Right cardiac atrium (tissue), 5 donors: ENCODE measurements at regions of chr5 and their contacts with region 1.

Region 1: GRCh38 chr5:147369742-147370374 is 135.0 kb downstream of the STK32A start:
- DNase-seq: no peak
- ATAC-seq: no peak
- H3K4me3 ChIP-seq: no peak overlapping the region
- H3K27ac ChIP-seq: no peak overlapping the region
- H3K4me1 ChIP-seq: no peaks in the 10 kb centered on the region
- H3K27me3 ChIP-seq: no peaks in the 10 kb centered on the region

Region 2: GRCh38 chr5:147223948-147224791 is 145.7 kb before region 1 on chr5:
- intact Hi-C with region 1: loop called in 3 of 4 experiments (anchors 5 to 10 kb)
- DNase-seq: no peak
- ATAC-seq: peak; percentile 68 to 69
- H3K4me3 ChIP-seq: no peak overlapping the region
- H3K27ac ChIP-seq: no peak overlapping the region
- H3K4me1 ChIP-seq: no peaks in the 10 kb centered on the region
- H3K27me3 ChIP-seq: no peaks in the 10 kb centered on the region

Region 3: GRCh38 chr5:147234825-147235635 is 134.8 kb before region 1 on chr5 and contains the start of gene STK32A:
- intact Hi-C with region 1: loop called in 1 of 4 experiments (anchors 5 kb)
- DNase-seq: peak; percentile 59 to 84 (median 84)
- ATAC-seq: peak; percentile 92 to 96
- H3K4me3 ChIP-seq: peak within 1 kb of the TSS; percentile 67
- H3K27ac ChIP-seq: no peak within 1 kb of the TSS
- H3K4me1 ChIP-seq: no peaks in the 10 kb centered on the region
- H3K27me3 ChIP-seq: no peaks in the 10 kb centered on the region
- total RNA-seq, gene STK32A: 1.9 to 2.9 (median 2.4) TPM

Region 4: GRCh38 chr5:147276497-147276896 is 93.4 kb before region 1 on chr5:
- intact Hi-C with region 1: no loop called
- DNase-seq: no peak
- ATAC-seq: no peak
- H3K4me3 ChIP-seq: no peak overlapping the region
- H3K27ac ChIP-seq: no peak overlapping the region
- H3K4me1 ChIP-seq: no peaks in the 10 kb centered on the region
- H3K27me3 ChIP-seq: no peaks in the 10 kb centered on the region

Region 5: DNA sequence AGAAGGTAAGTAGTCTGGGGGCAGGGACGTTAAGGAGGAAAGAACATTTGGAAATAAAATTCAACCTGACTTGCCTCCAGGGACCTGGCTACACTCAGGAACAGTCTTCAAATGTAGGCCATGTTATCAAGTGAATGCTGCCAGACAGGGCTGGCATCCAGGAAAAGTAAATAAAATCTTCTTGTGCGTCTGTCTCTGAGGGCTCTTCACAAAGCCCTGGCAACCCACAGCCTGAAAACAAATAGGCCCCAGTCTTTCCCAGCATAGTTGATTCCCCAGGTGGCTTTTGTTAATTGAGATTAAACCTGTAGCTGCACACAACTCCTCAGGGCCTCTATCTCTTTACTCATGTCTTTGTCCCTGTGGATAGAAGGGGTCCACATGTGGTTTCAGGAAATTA is 79.6 kb before region 1 on chr5:
- intact Hi-C with region 1: no loop called
- DNase-seq: peak in 2 of 3 donors; percentile 22 to 52
- ATAC-seq: peak; percentile 78 to 87
- H3K4me3 ChIP-seq: no peak overlapping the region
- H3K27ac ChIP-seq: no peak overlapping the region
- H3K4me1 ChIP-seq: no peaks in the 10 kb centered on the region
- H3K27me3 ChIP-seq: no peaks in the 10 kb centered on the region